ENCODE measurements at regions of chr1 and their contacts with region 1.

Region 1: DNA sequence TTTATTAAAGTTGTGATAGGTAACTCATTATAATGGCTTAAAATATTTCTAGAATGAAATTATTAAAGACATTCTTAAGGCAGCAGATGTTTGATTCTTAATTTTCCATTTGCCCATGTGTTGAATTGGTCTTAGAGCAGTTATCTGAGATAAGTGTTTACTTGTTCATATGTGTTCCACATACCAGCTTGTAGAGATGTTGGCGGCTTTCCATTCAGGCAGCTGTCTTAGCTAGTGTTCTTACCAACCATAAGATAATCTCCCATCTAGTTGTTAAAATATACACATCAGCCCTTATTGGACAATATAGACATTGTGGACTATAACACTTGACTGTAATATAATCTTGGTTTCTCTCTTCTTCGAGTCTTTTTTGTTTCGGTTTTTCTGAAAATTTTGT is 1372.9 kb upstream of the ADGRL2 start:
- DNase-seq: no peak
- ATAC-seq: no peak
- H3K4me3 ChIP-seq: no peak overlapping the region
- H3K4me3 Mint-ChIP-seq: no peak overlapping the region
- H3K27ac ChIP-seq: no peak overlapping the region
- H3K27ac Mint-ChIP-seq: no peak overlapping the region
- H3K4me1 ChIP-seq: no peaks in the 10 kb centered on the region
- H3K4me1 Mint-ChIP-seq: no peaks in the 10 kb centered on the region
- H3K27me3 ChIP-seq: no peaks in the 10 kb centered on the region
- H3K27me3 Mint-ChIP-seq: no peaks in the 10 kb centered on the region

Region 2: GRCh38 chr1:79629414-79629813 is 798.5 kb before region 1 on chr1:
- CTCF ChIA-PET with region 1: no interaction called
- POLR2A ChIA-PET with region 1: no interaction called
- DNase-seq: no peak
- ATAC-seq: no peak
- H3K4me3 ChIP-seq: no peak overlapping the region
- H3K4me3 Mint-ChIP-seq: no peak overlapping the region
- H3K27ac ChIP-seq: no peak overlapping the region
- H3K27ac Mint-ChIP-seq: no peak overlapping the region
- H3K4me1 ChIP-seq: no peaks in the 10 kb centered on the region
- H3K4me1 Mint-ChIP-seq: no peaks in the 10 kb centered on the region
- H3K27me3 ChIP-seq: no peaks in the 10 kb centered on the region
- H3K27me3 Mint-ChIP-seq: no peaks in the 10 kb centered on the region

Region 3: GRCh38 chr1:80413969-80414368 is 13.9 kb before region 1 on chr1:
- CTCF ChIA-PET with region 1: no interaction called
- POLR2A ChIA-PET with region 1: no interaction called
- DNase-seq: no peak
- ATAC-seq: no peak
- H3K4me3 ChIP-seq: no peak overlapping the region
- H3K4me3 Mint-ChIP-seq: no peak overlapping the region
- H3K27ac ChIP-seq: no peak overlapping the region
- H3K27ac Mint-ChIP-seq: no peak overlapping the region
- H3K4me1 ChIP-seq: no peaks in the 10 kb centered on the region
- H3K4me1 Mint-ChIP-seq: no peaks in the 10 kb centered on the region
- H3K27me3 ChIP-seq: no peaks in the 10 kb centered on the region
- H3K27me3 Mint-ChIP-seq: no peaks in the 10 kb centered on the region

Region 4: DNA sequence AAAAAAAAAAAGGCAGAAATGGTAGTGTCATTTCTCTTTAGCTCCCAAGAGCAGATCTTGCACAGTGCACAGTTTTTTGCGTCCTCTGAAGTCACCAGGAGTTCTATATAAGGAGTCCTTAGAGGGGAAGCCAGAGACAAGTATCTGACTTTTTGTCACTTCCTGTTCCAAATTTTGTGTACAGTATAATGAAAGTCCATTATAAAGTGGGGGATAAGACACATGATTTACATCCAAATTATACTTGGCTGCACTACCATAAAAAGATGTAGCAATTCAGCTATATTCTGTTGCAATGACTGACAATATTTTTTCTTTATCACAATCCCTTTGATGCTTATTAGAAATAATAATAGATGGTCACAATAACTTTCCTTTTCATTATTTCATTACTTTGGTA is 96.0 kb after region 1 on chr1:
- CTCF ChIA-PET with region 1: no interaction called
- POLR2A ChIA-PET with region 1: no interaction called
- DNase-seq: no peak
- ATAC-seq: no peak
- H3K4me3 ChIP-seq: no peak overlapping the region
- H3K4me3 Mint-ChIP-seq: no peak overlapping the region
- H3K27ac ChIP-seq: no peak overlapping the region
- H3K27ac Mint-ChIP-seq: no peak overlapping the region
- H3K4me1 ChIP-seq: no peaks in the 10 kb centered on the region
- H3K4me1 Mint-ChIP-seq: no peaks in the 10 kb centered on the region
- H3K27me3 ChIP-seq: peaks cover 0 to 2% of the 10 kb centered on the region in 2 experiments
- H3K27me3 Mint-ChIP-seq: no peaks in the 10 kb centered on the region

Region 5: DNA sequence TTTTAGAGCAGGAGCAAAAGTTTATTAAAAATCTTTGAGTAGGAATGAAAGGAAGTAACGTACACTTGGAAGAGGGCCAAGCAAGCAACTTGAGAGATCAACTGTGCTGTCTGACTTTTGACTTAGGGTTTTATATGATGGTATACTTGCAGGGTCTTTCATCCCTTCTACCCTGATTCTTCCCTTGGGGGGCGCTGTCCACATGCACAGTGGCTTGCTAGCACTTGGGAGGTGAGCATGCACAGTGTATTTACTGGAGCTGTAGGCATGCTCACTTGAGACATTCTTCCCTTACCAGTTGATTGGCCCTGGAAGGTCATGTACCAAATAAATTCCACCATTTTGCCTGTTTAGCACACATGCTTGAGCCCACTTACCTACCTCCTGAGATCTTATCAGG is 371.6 kb after region 1 on chr1:
- CTCF ChIA-PET with region 1: interaction called in 1 of 2 experiments, 10 read pairs
- POLR2A ChIA-PET with region 1: no interaction called
- DNase-seq: no peak
- ATAC-seq: no peak
- H3K4me3 ChIP-seq: no peak overlapping the region
- H3K4me3 Mint-ChIP-seq: no peak overlapping the region
- H3K27ac ChIP-seq: no peak overlapping the region
- H3K27ac Mint-ChIP-seq: no peak overlapping the region
- H3K4me1 ChIP-seq: no peaks in the 10 kb centered on the region
- H3K4me1 Mint-ChIP-seq: no peaks in the 10 kb centered on the region
- H3K27me3 ChIP-seq: no peaks in the 10 kb centered on the region
- H3K27me3 Mint-ChIP-seq: no peaks in the 10 kb centered on the region

Region 6: GRCh38 chr1:81305997-81306452 is 878.1 kb after region 1 on chr1:
- CTCF ChIA-PET with region 1: no interaction called
- POLR2A ChIA-PET with region 1: no interaction called
- DNase-seq: no peak
- ATAC-seq: no peak
- H3K4me3 ChIP-seq: peak overlapping the region in 1 of 2 donors; percentile 25
- H3K4me3 Mint-ChIP-seq: no peak overlapping the region
- H3K27ac ChIP-seq: no peak overlapping the region
- H3K27ac Mint-ChIP-seq: no peak overlapping the region
- H3K4me1 ChIP-seq: no peaks in the 10 kb centered on the region
- H3K4me1 Mint-ChIP-seq: no peaks in the 10 kb centered on the region
- H3K27me3 ChIP-seq: no peaks in the 10 kb centered on the region
- H3K27me3 Mint-ChIP-seq: peaks cover 3% of the 10 kb centered on the region in 2 donors

Measured in T-cell (primary cell).